Gastrocnemius medialis (tissue), 4 donors: ENCODE measurements at regions of chr7 and their contacts with region 1.

Region 1: DNA sequence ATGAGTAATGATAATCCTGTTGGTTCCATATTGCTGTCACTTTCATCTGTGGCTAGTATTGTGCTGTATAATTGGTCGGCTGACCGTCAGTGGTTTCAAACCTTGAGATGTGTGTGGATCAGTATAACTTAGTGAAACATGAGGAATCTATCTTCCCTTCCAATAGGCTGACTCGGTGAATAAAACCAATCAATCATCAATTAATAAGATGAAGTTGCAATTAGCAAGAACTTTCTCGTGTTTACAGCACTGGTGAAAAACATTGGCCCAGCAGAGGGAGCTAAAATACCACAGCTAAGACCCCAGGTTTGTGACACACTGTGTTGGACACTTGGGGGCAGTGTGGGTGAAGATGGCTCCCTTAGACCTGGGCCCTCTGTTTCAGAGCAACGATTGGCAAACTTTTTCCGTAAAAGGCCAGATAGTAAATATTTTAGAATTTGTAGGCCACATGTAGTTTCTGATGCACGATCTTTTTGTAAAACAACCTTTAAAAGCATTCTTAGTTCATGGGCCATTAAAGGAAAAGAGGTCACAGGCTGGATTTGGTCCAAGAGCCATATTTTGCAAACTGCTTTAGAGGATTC is 47.8 kb downstream of the STRA8 start:
- DNase-seq: peak; percentile 68 to 73
- ATAC-seq: peak; percentile 86 to 96
- H3K4me3 ChIP-seq: no peak overlapping the region
- H3K27ac ChIP-seq: no peak overlapping the region
- H3K4me1 ChIP-seq: peaks cover 19 to 33% of the 10 kb centered on the region in 2 donors
- H3K27me3 ChIP-seq: no peaks in the 10 kb centered on the region
- CTCF ChIP-seq: peak; percentile 88 to 98 (median 89)
- POLR2A ChIP-seq: no peak

Region 2: DNA sequence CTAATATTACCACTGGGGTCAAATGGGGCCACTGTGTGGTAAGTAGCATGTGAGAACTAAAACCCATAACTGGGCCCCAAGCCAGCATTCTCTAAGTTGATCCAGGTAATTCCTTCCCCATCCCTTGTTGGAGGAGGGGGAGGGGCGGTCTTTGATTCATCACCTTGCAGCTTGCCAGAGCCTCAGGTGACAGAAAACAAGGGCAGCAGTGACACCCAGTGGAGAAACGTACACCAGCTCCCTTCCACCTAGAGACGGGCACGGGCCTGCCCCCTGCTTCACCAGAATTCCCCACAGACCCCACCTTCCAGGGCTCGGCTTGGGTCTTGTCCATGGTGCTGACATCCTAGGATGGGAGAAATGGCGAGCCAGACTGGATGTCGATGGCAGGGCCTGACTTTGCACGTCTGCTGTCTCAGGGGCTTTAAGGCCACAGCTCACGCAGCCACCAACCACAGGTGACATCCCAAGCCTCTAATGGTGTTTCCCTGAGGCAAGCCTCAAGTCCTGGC is 54.2 kb after region 1 on chr7:
- in situ Hi-C with region 1: loop called in 2 of 4 experiments (anchors 5 kb)
- intact Hi-C with region 1: loop called (anchors 1 kb)
- DNase-seq: peak; percentile 50 to 67
- ATAC-seq: peak; percentile 90 to 93
- H3K4me3 ChIP-seq: no peak overlapping the region
- H3K27ac ChIP-seq: no peak overlapping the region
- H3K4me1 ChIP-seq: peaks cover 0 to 7% of the 10 kb centered on the region in 2 donors
- H3K27me3 ChIP-seq: no peaks in the 10 kb centered on the region
- CTCF ChIP-seq: peak; percentile 48 to 65 (median 63)
- POLR2A ChIP-seq: no peak

Region 3: DNA sequence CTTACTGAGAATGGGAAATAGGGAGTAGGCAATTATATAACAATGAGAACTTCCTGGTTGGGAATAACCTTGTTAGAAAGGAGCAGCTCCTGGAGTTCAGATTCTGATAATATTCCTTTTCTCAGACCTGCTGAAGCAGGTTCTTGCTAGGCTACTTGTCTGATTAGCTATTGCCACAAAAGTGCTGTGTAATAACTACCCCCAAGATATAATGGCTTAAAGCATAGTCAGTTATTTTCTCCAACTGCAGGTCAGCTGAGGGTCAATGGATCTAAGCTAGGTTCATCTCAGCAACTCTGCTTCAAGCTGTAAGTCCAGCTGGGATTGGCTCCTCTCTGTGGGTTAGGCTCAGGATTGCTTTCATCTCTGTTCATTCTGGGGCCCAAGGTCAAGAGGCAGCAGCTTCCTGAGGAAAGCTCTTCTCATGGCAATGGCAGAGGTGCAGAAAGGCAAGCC is 237.8 kb after region 1 on chr7:
- in situ Hi-C with region 1: no loop called
- intact Hi-C with region 1: no loop called
- DNase-seq: no peak
- ATAC-seq: no peak
- H3K4me3 ChIP-seq: no peak overlapping the region
- H3K27ac ChIP-seq: no peak overlapping the region
- H3K4me1 ChIP-seq: no peaks in the 10 kb centered on the region
- H3K27me3 ChIP-seq: no peaks in the 10 kb centered on the region
- CTCF ChIP-seq: no peak
- POLR2A ChIP-seq: no peak

Region 4: DNA sequence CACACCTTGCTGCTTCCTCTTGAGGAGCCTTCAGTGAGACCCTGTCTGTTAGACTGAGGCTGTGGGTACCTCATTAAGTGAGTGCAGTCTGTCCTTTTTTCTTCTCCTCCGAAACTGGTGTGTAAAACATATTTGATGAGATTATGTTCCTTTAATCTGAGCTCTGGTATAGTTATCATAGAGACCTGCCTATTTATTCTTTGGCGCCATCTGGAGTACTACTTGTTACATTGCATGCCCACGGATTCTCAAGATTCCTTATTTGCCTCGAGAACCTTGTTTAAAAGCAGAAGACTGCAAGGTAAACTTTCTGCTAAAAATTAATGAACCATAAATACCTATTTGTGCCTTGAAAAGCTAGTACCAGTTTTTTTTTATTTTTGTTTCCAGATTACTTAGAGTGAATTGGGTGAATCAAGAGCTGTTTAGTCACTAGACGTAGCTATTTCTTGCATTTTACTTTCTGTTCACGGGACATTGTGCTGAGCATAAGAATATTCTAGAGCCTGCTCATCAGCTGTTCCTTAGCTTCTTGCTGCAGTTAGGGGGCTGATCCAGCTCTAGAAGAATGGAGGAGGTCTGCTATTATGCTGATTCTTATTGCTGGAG is 363.9 kb after region 1 on chr7:
- in situ Hi-C with region 1: loop called in 3 of 4 experiments (anchors 10 to 25 kb)
- intact Hi-C with region 1: loop called (anchors 2 kb)
- DNase-seq: no peak
- ATAC-seq: peak in 1 of 2 donors; percentile 53
- H3K4me3 ChIP-seq: no peak overlapping the region
- H3K27ac ChIP-seq: no peak overlapping the region
- H3K4me1 ChIP-seq: no peaks in the 10 kb centered on the region
- H3K27me3 ChIP-seq: no peaks in the 10 kb centered on the region
- CTCF ChIP-seq: peak in 4 of 5 experiments; percentile 39 to 63 (median 50)
- POLR2A ChIP-seq: no peak